Mammary epithelial cell (primary cell): ENCODE measurements at regions of chr3 and their contacts with region 1.

Region 1: GRCh38 chr3:151282921-151283320 is 4.6 kb upstream of the P2RY14 start:
- DNase-seq: peak; percentile 42
- H3K4me3 ChIP-seq: no peak overlapping the region
- H3K27ac ChIP-seq: no peak overlapping the region
- H3K4me1 ChIP-seq: peaks cover 5% of the 10 kb centered on the region
- H3K27me3 ChIP-seq: peaks cover 2% of the 10 kb centered on the region
- CTCF ChIP-seq: peak; percentile 48 to 64

Region 2: GRCh38 chr3:151168269-151169094 is 114.4 kb before region 1 on chr3:
- CTCF ChIA-PET with region 1: interaction called, 3 read pairs
- dilution Hi-C with region 1: no loop called
- in situ Hi-C with region 1: loop called (anchors 5 kb)
- intact Hi-C with region 1: loop called (anchors 1 kb)
- DNase-seq: peak; percentile 48
- H3K4me3 ChIP-seq: no peak overlapping the region
- H3K27ac ChIP-seq: no peak overlapping the region
- H3K4me1 ChIP-seq: peaks cover 2% of the 10 kb centered on the region
- H3K27me3 ChIP-seq: no peaks in the 10 kb centered on the region
- CTCF ChIP-seq: peak; percentile 81 to 94

Region 3: DNA sequence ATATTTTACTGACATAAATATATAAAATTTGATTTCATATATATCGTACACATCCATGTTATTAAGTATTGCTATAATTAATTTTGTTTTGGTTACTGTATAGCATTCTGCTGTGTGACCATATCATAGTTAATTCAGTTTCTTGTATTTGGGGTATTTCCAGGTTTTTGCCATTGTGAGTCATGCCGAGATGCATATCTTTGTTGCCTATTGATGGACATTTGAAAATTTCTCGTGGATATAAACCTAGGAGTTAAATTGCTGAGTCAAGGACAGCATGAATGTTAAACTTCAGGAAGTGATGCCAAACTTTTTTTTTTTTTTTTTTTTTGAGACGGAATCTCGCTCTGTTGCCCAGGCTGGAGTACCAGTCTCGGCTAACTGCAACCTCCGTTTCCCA is 46.2 kb before region 1 on chr3:
- CTCF ChIA-PET with region 1: no interaction called
- dilution Hi-C with region 1: no loop called
- in situ Hi-C with region 1: no loop called
- intact Hi-C with region 1: no loop called
- DNase-seq: peak; percentile 32
- H3K4me3 ChIP-seq: no peak overlapping the region
- H3K27ac ChIP-seq: no peak overlapping the region
- H3K4me1 ChIP-seq: no peaks in the 10 kb centered on the region
- H3K27me3 ChIP-seq: peaks cover 6% of the 10 kb centered on the region
- CTCF ChIP-seq: no peak

Region 4: DNA sequence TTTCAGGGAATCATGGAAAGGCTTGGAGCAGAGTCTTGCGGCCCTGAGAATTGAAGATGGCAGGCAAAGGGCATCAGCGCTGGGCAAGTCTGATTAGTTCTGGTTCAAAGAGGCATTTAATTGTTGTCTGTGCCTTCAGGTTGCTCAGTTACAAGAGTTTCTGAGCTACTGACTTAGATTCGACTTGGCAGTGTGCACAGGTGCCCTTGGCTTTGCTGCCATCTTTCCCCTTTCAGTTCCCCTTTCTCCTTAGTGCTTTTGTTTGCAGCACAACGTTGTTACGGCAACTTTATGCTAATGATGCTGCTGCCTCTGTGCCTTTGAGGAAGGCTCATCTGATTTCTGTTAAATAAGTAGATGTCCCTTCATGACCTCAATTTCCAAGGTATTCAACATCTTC is 17.1 kb before region 1 on chr3:
- CTCF ChIA-PET with region 1: interaction called, 17 read pairs
- dilution Hi-C with region 1: no loop called
- in situ Hi-C with region 1: no loop called
- intact Hi-C with region 1: no loop called
- DNase-seq: no peak
- H3K4me3 ChIP-seq: no peak overlapping the region
- H3K27ac ChIP-seq: no peak overlapping the region
- H3K4me1 ChIP-seq: no peaks in the 10 kb centered on the region
- H3K27me3 ChIP-seq: peaks cover 4% of the 10 kb centered on the region
- CTCF ChIP-seq: no peak